ENCODE measurements at regions of chr2 and their contacts with region 1.

Region 1: DNA sequence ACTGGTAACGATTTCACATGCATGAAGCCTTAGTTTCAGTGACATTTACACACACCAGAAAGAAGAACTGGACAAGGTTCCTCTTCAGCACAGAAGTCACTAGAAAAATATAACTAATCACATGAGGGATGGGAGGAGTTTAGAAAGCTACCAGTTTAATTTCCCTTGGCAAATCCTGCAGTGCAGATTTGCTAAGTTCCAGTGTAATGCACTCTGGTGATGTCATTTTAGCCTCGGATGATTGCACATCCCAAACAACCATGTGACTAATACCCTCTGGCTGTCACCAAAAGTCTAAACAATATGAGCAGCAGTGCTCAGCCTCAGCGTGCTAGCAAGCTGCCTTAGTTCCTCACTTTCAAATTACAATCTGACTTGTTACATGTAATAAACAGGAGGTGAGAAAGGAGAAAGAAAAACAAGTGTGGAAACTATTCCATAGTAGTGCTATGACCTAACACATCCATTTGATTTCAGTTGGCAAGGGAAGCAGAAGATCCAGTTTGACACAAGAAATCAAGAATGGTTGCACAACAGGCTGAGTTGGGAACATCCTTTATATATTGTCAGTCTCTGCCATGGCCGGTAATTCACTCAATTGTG is 35.3 kb upstream of the PPP1CB start:
- DNase-seq: peak; percentile 93
- ATAC-seq: peak; percentile 91
- H3K4me3 ChIP-seq: peak overlapping the region; percentile 10; the same call in 1 of the 2 replicates
- H3K27ac ChIP-seq: peak overlapping the region; percentile 80
- H3K4me1 ChIP-seq: peaks cover 48% of the 10 kb centered on the region
- H3K27me3 ChIP-seq: no peaks in the 10 kb centered on the region
- CTCF ChIP-seq: no peak

Region 2: GRCh38 chr2:28643911-28644334 is 72.4 kb before region 1 on chr2:
- CTCF ChIA-PET with region 1: no interaction called
- POLR2A ChIA-PET with region 1: no interaction called
- intact Hi-C with region 1: loop called (anchors 5 kb)
- DNase-seq: peak; percentile 96
- ATAC-seq: peak; percentile 92
- H3K4me3 ChIP-seq: peak overlapping the region; percentile 28; the same call in 1 of the 2 replicates
- H3K27ac ChIP-seq: peak overlapping the region; percentile 96
- H3K4me1 ChIP-seq: peaks cover 68% of the 10 kb centered on the region
- H3K27me3 ChIP-seq: no peaks in the 10 kb centered on the region
- CTCF ChIP-seq: no peak

Region 3: GRCh38 chr2:28687640-28688381 is 28.6 kb before region 1 on chr2:
- CTCF ChIA-PET with region 1: no interaction called
- POLR2A ChIA-PET with region 1: interaction called, 12 read pairs
- intact Hi-C with region 1: no loop called
- DNase-seq: no peak
- ATAC-seq: no peak
- H3K4me3 ChIP-seq: no peak overlapping the region
- H3K27ac ChIP-seq: no peak overlapping the region
- H3K4me1 ChIP-seq: peaks cover 10% of the 10 kb centered on the region
- H3K27me3 ChIP-seq: no peaks in the 10 kb centered on the region
- CTCF ChIP-seq: no peak

Region 4: DNA sequence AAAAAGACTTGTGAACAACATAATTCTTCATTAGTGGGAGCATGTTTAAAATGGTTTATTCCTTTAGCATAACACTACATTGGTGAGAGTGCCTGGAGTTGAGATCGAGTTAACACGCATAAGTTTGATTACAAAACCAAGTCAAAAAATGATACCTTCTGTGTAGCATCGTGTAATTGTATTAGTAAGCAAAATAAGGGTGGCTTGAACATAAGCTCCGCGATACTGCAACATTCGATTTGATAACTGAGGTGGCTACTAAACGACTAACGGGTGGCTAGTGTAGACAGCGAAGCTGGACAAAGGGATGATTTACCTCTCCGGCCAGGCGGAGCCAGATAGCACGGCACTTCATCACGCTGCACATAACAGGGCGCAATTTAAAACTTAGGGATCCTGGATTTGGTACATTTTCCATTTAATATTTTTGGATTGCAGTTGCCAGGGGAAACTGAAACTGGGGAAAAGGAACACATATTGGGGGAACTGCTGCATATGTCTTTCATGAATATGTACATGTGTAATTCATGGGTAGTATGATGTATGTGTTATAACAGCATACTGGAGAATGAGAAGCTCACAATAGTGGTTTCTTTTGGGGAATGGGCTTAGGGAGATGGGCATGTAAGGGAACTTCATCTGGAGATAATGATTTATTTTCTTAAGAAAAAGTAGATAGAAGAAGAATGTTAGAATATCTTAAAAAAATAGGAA is 228.3 kb after region 1 on chr2:
- CTCF ChIA-PET with region 1: no interaction called
- POLR2A ChIA-PET with region 1: no interaction called
- intact Hi-C with region 1: no loop called
- DNase-seq: no peak
- ATAC-seq: no peak
- H3K4me3 ChIP-seq: no peak overlapping the region
- H3K27ac ChIP-seq: no peak overlapping the region
- H3K4me1 ChIP-seq: no peaks in the 10 kb centered on the region
- H3K27me3 ChIP-seq: no peaks in the 10 kb centered on the region
- CTCF ChIP-seq: no peak

Region 5: DNA sequence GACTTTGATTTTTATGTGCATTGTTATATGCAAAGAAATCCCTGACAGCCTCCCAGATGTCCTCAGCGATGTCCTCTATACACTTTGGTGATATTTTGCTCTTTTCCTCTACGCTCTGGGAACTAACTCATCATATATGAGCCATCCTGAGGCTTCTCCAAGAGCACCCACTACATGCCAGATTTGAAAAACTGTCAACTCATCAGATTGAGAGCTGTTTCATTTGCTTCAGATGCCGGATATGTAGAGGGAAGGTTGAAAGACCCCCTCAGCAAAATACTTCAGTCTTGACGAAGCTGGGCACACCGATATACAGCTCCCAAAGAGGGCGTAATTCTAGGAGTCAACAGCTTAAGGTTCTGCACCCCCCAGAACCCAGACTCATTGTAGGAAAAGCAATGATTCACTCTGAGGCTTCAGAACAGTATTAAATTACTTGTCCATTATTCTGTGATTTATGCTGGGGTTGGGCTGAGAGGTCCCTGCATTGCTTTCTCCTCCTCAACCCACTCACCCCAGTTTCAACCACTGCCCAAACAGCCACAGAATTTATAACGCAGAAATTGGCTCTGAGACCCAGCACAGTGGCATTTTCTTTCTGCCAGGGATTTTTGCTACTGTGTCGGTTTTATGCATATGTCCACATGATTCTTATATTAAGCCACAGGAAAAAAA is 863.3 kb after region 1 on chr2:
- CTCF ChIA-PET with region 1: no interaction called
- POLR2A ChIA-PET with region 1: no interaction called
- intact Hi-C with region 1: no loop called
- DNase-seq: peak; percentile 37
- ATAC-seq: no peak
- H3K4me3 ChIP-seq: no peak overlapping the region
- H3K27ac ChIP-seq: no peak overlapping the region
- H3K4me1 ChIP-seq: peaks cover 26% of the 10 kb centered on the region
- H3K27me3 ChIP-seq: no peaks in the 10 kb centered on the region
- CTCF ChIP-seq: no peak

Measured in PC-3 (cell line).